ENCODE measurements at regions of chr6 and their contacts with region 1.

Region 1: GRCh38 chr6:33208091-33208967 is at the start of gene RING1:
- DNase-seq: peak; percentile 87 to 90 (median 87)
- H3K4me3 ChIP-seq: peak within 1 kb of the TSS; percentile 75 to 78
- H3K4me3 Mint-ChIP-seq: peak within 1 kb of the TSS; percentile 88 to 97 (median 92)
- H3K27ac ChIP-seq: peak within 1 kb of the TSS; percentile 85
- H3K27ac Mint-ChIP-seq: peak within 1 kb of the TSS; percentile 88 to 96 (median 95)
- H3K4me1 ChIP-seq: peaks cover 44% of the 10 kb centered on the region
- H3K4me1 Mint-ChIP-seq: peaks cover 32 to 61% (median 43%) of the 10 kb centered on the region in 4 donors
- H3K27me3 ChIP-seq: no peaks in the 10 kb centered on the region
- H3K27me3 Mint-ChIP-seq: peaks cover 3 to 12% of the 10 kb centered on the region in 2 donors
- total RNA-seq, gene RING1: 36.8 to 38.4 TPM

Region 2: GRCh38 chr6:33161354-33162331 is 46.7 kb before region 1 on chr6:
- CTCF ChIA-PET with region 1: no interaction called
- POLR2A ChIA-PET with region 1: interaction called, 13 read pairs
- intact Hi-C with region 1: no loop called
- DNase-seq: peak; percentile 75 to 84 (median 77)
- H3K4me3 ChIP-seq: peak overlapping the region; percentile 23 to 54
- H3K4me3 Mint-ChIP-seq: peak overlapping the region; percentile 83 to 92 (median 89)
- H3K27ac ChIP-seq: no peak overlapping the region
- H3K27ac Mint-ChIP-seq: peak overlapping the region in 6 of 7 donors; percentile 45 to 91 (median 86)
- H3K4me1 ChIP-seq: peaks cover 5% of the 10 kb centered on the region
- H3K4me1 Mint-ChIP-seq: peaks cover 1 to 11% (median 8%) of the 10 kb centered on the region in 4 donors
- H3K27me3 ChIP-seq: no peaks in the 10 kb centered on the region
- H3K27me3 Mint-ChIP-seq: peaks cover 2 to 8% of the 10 kb centered on the region in 2 donors

Region 3: GRCh38 chr6:33183071-33183683 is 25.2 kb before region 1 on chr6:
- CTCF ChIA-PET with region 1: no interaction called
- POLR2A ChIA-PET with region 1: interaction called, 10 read pairs
- intact Hi-C with region 1: no loop called
- DNase-seq: peak in 1 of 5 donors; percentile 12
- H3K4me3 ChIP-seq: peak overlapping the region in 1 of 2 donors; percentile 3
- H3K4me3 Mint-ChIP-seq: peak overlapping the region; percentile 42 to 85 (median 54)
- H3K27ac ChIP-seq: no peak overlapping the region
- H3K27ac Mint-ChIP-seq: peak overlapping the region; percentile 56 to 91 (median 83)
- H3K4me1 ChIP-seq: peaks cover 20% of the 10 kb centered on the region
- H3K4me1 Mint-ChIP-seq: peaks cover 17 to 28% (median 21%) of the 10 kb centered on the region in 4 donors
- H3K27me3 ChIP-seq: peaks cover 1% of the 10 kb centered on the region
- H3K27me3 Mint-ChIP-seq: peaks cover 7 to 10% of the 10 kb centered on the region in 2 donors

Region 4: GRCh38 chr6:33323623-33323948 is 115.3 kb after region 1 on chr6:
- CTCF ChIA-PET with region 1: no interaction called
- POLR2A ChIA-PET with region 1: no interaction called
- intact Hi-C with region 1: loop called (anchors 1 kb)
- DNase-seq: no peak
- H3K4me3 ChIP-seq: peak overlapping the region; percentile 53 to 68
- H3K4me3 Mint-ChIP-seq: peak overlapping the region; percentile 94 to 100 (median 98)
- H3K27ac ChIP-seq: peak overlapping the region; percentile 88
- H3K27ac Mint-ChIP-seq: peak overlapping the region; percentile 89 to 100 (median 96)
- H3K4me1 ChIP-seq: peaks cover 47% of the 10 kb centered on the region
- H3K4me1 Mint-ChIP-seq: peaks cover 32 to 59% (median 46%) of the 10 kb centered on the region in 4 donors
- H3K27me3 ChIP-seq: no peaks in the 10 kb centered on the region
- H3K27me3 Mint-ChIP-seq: no peaks in the 10 kb centered on the region

Measured in CD4-positive, alpha-beta memory T cell (primary cell).